PC-9 (cell line): ENCODE measurements at regions of chr4 and their contacts with region 1.

Region 1: GRCh38 chr4:154982187-154983047 is 201.3 kb downstream of the RBM46 start:
- DNase-seq: peak in 1 of 2 experiments; percentile 43
- H3K4me3 ChIP-seq: no peak overlapping the region
- H3K27ac ChIP-seq: no peak overlapping the region
- H3K4me1 ChIP-seq: no peaks in the 10 kb centered on the region
- H3K27me3 ChIP-seq: no peaks in the 10 kb centered on the region
- CTCF ChIP-seq: peak; percentile 60

Region 2: DNA sequence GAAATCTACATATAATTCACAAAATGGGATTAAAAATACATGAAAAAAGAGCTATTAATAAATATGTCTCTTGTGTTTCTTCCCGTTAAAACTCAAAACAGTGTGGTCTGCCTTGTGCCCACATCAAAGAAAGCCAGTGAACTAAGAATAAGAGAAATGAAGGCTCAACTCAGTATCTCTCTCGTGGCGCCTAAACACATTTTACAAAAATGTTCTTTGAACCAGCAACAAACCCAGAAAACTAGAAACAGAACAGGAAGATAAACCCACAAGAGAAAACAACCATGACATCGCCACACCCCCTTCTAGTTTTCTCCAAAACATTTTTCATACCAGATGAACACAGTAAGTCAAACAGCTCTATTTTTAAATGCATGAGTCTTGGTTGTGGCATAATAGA is 621.0 kb before region 1 on chr4:
- CTCF ChIA-PET with region 1: no interaction called
- POLR2A ChIA-PET with region 1: no interaction called
- intact Hi-C with region 1: no loop called
- DNase-seq: no peak
- H3K4me3 ChIP-seq: no peak overlapping the region
- H3K27ac ChIP-seq: no peak overlapping the region
- H3K4me1 ChIP-seq: no peaks in the 10 kb centered on the region
- H3K27me3 ChIP-seq: no peaks in the 10 kb centered on the region
- CTCF ChIP-seq: no peak

Region 3: DNA sequence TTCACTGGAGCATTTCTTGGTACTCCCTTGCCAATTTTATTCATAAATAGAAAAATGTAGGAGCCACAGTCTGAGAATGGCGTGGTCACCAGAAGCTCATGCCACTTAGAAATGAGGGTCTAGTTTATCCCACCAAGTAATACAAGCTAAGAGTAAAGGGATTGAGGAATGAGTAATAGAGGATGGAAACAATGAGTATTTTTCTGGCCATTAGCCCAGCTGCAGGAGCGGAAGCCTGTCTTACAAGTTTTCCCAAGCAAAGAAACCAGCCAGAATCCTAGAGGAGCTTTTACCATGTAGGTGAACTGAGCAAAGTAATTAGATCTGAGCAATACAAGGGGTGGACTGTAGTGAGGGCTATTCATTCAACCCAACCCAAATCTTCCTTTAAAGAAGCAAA is 65.3 kb after region 1 on chr4:
- CTCF ChIA-PET with region 1: no interaction called
- POLR2A ChIA-PET with region 1: no interaction called
- intact Hi-C with region 1: no loop called
- DNase-seq: no peak
- H3K4me3 ChIP-seq: no peak overlapping the region
- H3K27ac ChIP-seq: no peak overlapping the region
- H3K4me1 ChIP-seq: no peaks in the 10 kb centered on the region
- H3K27me3 ChIP-seq: no peaks in the 10 kb centered on the region
- CTCF ChIP-seq: no peak

Region 4: DNA sequence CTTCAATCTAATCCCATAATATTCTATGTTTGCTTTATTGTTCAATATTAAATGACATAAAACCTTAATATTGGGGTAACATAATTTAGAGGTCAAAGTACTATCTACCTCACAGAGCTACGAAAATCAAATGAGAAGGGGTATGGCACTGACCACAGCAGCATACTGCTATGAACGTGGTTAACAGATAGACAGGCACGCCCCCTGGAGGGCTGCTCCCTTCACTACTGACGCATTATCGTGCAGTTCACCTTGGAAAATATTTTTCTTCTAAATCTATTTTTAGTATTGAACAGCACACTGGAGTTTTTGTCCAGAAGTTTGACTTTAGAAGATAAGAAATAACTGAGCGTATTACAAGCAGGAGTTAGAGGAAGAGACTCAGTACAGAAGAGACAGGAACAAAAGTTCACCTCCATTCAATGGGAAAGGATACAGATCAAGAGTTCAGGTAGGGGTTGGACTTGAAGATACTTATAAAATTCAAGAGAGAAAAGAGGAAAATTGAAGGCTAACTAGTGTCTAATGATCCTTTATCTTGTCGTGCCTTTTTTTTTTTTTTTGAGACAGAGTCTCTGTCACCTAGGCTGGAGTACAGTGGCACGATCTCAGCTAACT is 371.6 kb after region 1 on chr4:
- CTCF ChIA-PET with region 1: no interaction called
- POLR2A ChIA-PET with region 1: no interaction called
- intact Hi-C with region 1: loop called (anchors 5 kb)
- DNase-seq: peak in 1 of 2 experiments; percentile 22
- H3K4me3 ChIP-seq: no peak overlapping the region
- H3K27ac ChIP-seq: no peak overlapping the region
- H3K4me1 ChIP-seq: no peaks in the 10 kb centered on the region
- H3K27me3 ChIP-seq: no peaks in the 10 kb centered on the region
- CTCF ChIP-seq: peak; percentile 61

Region 5: GRCh38 chr4:155371432-155372043 is 389.1 kb after region 1 on chr4:
- CTCF ChIA-PET with region 1: no interaction called
- POLR2A ChIA-PET with region 1: no interaction called
- intact Hi-C with region 1: loop called (anchors 2 kb)
- DNase-seq: no peak
- H3K4me3 ChIP-seq: no peak overlapping the region
- H3K27ac ChIP-seq: no peak overlapping the region
- H3K4me1 ChIP-seq: peaks cover 10% of the 10 kb centered on the region; the same call in 1 of the 2 replicates
- H3K27me3 ChIP-seq: no peaks in the 10 kb centered on the region
- CTCF ChIP-seq: peak; percentile 71

Region 6: GRCh38 chr4:156347412-156348075 is 1365.1 kb after region 1 on chr4:
- CTCF ChIA-PET with region 1: no interaction called
- POLR2A ChIA-PET with region 1: no interaction called
- intact Hi-C with region 1: no loop called
- DNase-seq: peak; percentile 15 to 53
- H3K4me3 ChIP-seq: no peak overlapping the region
- H3K27ac ChIP-seq: peak overlapping the region; percentile 60
- H3K4me1 ChIP-seq: peaks cover 17% of the 10 kb centered on the region
- H3K27me3 ChIP-seq: no peaks in the 10 kb centered on the region
- CTCF ChIP-seq: no peak